ENCODE measurements at regions of chr17 and their contacts with region 1.

Region 1: DNA sequence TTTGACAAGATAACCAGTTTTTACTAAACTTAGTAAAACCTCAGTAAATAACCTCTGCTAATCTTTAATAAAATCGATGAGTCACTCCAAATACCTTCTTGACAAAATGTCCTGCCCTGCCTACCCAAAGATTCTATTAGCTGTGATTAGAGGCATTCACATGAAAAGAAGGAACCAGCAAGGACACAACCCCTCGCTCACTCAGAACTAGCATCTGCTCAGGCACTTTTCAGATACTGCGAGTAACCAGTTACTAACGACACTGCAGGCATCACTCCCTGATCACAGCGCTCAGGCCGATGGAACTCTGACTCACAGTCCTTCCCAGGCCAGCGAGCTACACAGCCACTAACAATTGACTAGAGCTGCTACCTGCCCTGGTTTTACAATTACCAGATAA is 24.3 kb downstream of the PELP1 start:
- DNase-seq: peak; percentile 44
- H3K4me3 Mint-ChIP-seq: peak overlapping the region; percentile 19
- H3K27ac Mint-ChIP-seq: peak overlapping the region; percentile 4
- H3K4me1 Mint-ChIP-seq: peaks cover 20% of the 10 kb centered on the region
- H3K27me3 Mint-ChIP-seq: no peaks in the 10 kb centered on the region
- CTCF ChIP-seq: no peak

Region 2: GRCh38 chr17:4666296-4666695 is 13.4 kb before region 1 on chr17:
- CTCF ChIA-PET with region 1: interaction called, 3 read pairs
- POLR2A ChIA-PET with region 1: interaction called, 10 read pairs
- intact Hi-C with region 1: no loop called
- DNase-seq: no peak
- H3K4me3 Mint-ChIP-seq: no peak overlapping the region
- H3K27ac Mint-ChIP-seq: no peak overlapping the region
- H3K4me1 Mint-ChIP-seq: no peaks in the 10 kb centered on the region
- H3K27me3 Mint-ChIP-seq: peaks cover 48% of the 10 kb centered on the region
- CTCF ChIP-seq: no peak

Region 3: GRCh38 chr17:4764595-4764994 is 84.9 kb after region 1 on chr17:
- CTCF ChIA-PET with region 1: no interaction called
- POLR2A ChIA-PET with region 1: no interaction called
- intact Hi-C with region 1: no loop called
- DNase-seq: no peak
- H3K4me3 Mint-ChIP-seq: no peak overlapping the region
- H3K27ac Mint-ChIP-seq: no peak overlapping the region
- H3K4me1 Mint-ChIP-seq: no peaks in the 10 kb centered on the region
- H3K27me3 Mint-ChIP-seq: peaks cover 18% of the 10 kb centered on the region
- CTCF ChIP-seq: no peak